HepG2 (cell line): ENCODE measurements at regions of chr2 and their contacts with region 1.

Region 1: DNA sequence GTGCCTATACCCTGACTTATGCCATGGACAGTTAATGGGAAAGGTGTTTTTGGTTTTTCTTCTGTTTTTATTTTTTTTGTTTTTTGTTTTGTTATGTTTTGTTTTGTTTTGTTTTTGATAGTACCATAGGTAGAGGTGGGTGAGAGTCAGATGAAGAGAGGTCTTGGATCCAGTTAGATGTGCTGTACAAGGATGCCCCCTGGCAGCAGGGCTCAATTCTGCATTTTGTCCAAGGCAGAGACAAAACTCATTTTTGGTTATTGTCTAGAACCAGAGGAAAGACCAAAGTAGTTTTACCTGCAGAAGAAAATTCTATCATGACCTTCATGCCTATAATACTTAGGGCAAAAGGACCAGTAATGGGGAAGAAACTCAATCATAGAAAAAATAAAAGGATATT is 48.5 kb downstream of the SLC5A7 start:
- DNase-seq: no peak
- ATAC-seq: no peak
- H3K4me3 ChIP-seq: no peak overlapping the region
- H3K27ac ChIP-seq: no peak overlapping the region
- H3K4me1 ChIP-seq: no peaks in the 10 kb centered on the region
- H3K27me3 ChIP-seq: no peaks in the 10 kb centered on the region
- CTCF ChIP-seq: 0 out of 2 replicates have a peak, but pooled peaks have one; percentile 20
- EP300 ChIP-seq: no peak
- POLR2A ChIP-seq: no peak
- RAD21 ChIP-seq: no peak

Region 2: DNA sequence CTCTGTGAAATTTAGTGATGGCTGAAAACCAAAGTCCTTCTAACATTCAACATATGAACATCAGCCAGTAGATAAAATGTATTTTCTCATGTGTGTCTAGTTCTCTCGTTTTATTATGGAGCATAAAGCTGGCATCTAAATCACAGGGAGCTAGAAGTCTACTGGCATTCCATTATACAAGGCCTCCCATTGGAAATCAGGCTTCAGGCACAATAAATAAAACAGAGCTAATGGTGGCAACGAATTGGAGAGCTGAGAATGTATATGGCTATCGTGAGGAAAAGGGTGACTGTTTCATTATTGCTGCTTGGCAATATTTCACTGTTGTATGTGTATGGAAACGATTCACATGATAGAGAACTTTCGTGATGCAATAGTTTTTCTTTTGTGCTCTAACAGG is 13.9 kb after region 1 on chr2:
- CTCF ChIA-PET with region 1: no interaction called
- POLR2A ChIA-PET with region 1: no interaction called
- in situ Hi-C with region 1: no loop called
- intact Hi-C with region 1: no loop called
- DNase-seq: no peak
- ATAC-seq: no peak
- H3K4me3 ChIP-seq: no peak overlapping the region
- H3K27ac ChIP-seq: no peak overlapping the region
- H3K4me1 ChIP-seq: no peaks in the 10 kb centered on the region
- H3K27me3 ChIP-seq: no peaks in the 10 kb centered on the region
- CTCF ChIP-seq: no peak
- EP300 ChIP-seq: no peak
- POLR2A ChIP-seq: no peak
- RAD21 ChIP-seq: no peak

Region 3: DNA sequence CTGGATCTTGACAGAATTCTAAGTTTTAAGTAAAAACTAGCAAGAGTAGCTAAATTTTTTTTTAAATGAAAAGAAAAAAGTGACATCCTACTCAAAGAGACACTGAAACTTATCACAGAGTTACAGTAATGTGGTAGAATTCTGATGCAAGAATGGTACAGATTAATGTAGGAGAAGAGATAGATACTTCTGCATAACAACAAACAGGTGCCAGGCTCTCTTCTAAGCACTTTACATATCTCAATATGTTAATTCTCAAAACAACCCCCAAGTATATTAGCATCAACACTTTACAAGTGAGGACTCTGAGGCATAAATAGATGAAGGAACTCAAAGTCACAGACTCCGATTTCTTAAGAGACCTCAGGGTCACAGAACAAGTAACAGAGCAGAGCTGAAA is 442.2 kb after region 1 on chr2:
- CTCF ChIA-PET with region 1: no interaction called
- POLR2A ChIA-PET with region 1: no interaction called
- in situ Hi-C with region 1: no loop called
- intact Hi-C with region 1: loop called (anchors 5 kb)
- DNase-seq: no peak
- ATAC-seq: no peak
- H3K4me3 ChIP-seq: no peak overlapping the region
- H3K27ac ChIP-seq: no peak overlapping the region
- H3K4me1 ChIP-seq: no peaks in the 10 kb centered on the region
- H3K27me3 ChIP-seq: no peaks in the 10 kb centered on the region
- CTCF ChIP-seq: no peak
- EP300 ChIP-seq: no peak
- POLR2A ChIP-seq: no peak
- RAD21 ChIP-seq: no peak